Endothelial cell of umbilical vein (primary cell): ENCODE measurements at regions of chr17 and their contacts with region 1.

Region 1: DNA sequence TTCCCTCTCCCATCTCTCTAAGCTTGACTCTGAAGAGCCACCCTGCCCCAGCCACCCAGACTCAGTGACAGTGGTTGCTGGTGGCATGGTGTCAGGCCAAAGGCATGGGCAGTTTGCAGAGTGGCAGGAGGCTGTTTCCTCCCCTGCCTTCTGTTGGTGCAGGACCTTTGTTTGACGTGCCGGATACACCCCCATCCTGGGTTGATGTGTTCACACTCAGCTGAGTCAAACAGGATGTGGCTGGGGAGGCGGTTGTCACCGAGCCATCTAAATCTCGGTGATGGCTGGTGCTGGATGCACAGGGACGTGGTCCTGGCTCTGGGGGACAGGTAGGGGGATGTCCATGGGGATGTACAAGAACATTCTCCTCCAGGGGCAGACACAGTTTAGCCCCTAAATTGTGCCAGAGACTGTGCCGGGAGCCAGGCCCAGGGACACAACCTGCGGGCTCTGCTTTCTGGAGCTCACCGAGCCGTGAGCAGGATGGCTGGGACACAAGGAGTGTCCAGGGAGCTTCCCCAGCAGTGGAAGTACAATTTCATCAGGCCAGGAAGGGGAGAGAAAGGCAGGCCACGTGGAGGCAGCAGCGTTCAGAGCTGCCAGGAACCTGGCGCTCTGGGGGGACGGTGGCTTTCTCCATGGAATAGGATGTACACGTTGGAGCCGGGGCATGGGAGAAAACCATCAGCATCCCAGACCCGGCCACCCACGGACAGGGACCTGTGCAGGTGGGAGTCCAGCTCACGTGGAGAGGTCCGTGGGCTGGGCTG is 264.2 kb downstream of the SEC14L1 start:
- DNase-seq: peak; percentile 82
- H3K4me3 ChIP-seq: no peak overlapping the region
- H3K27ac ChIP-seq: peak overlapping the region; percentile 63
- H3K4me1 ChIP-seq: peaks cover 25% of the 10 kb centered on the region
- H3K27me3 ChIP-seq: no peaks in the 10 kb centered on the region
- CTCF ChIP-seq: no peak
- POLR2A ChIP-seq: no peak

Region 2: GRCh38 chr17:77331301-77331864 is 73.6 kb before region 1 on chr17:
- CTCF ChIA-PET with region 1: interaction called, 63 read pairs
- POLR2A ChIA-PET with region 1: no interaction called
- dilution Hi-C with region 1: no loop called
- intact Hi-C with region 1: loop called (anchors 1 kb)
- DNase-seq: peak; percentile 78
- H3K4me3 ChIP-seq: peak overlapping the region in 1 of 3 experiments; percentile 14
- H3K27ac ChIP-seq: no peak overlapping the region
- H3K4me1 ChIP-seq: peaks cover 5% of the 10 kb centered on the region
- H3K27me3 ChIP-seq: no peaks in the 10 kb centered on the region
- CTCF ChIP-seq: peak; percentile 85 to 95
- POLR2A ChIP-seq: no peak

Region 3: GRCh38 chr17:77391668-77392375 is 13.2 kb before region 1 on chr17:
- CTCF ChIA-PET with region 1: interaction called, 58 read pairs
- POLR2A ChIA-PET with region 1: no interaction called
- dilution Hi-C with region 1: no loop called
- intact Hi-C with region 1: loop called (anchors 1 kb)
- DNase-seq: peak; percentile 57
- H3K4me3 ChIP-seq: no peak overlapping the region
- H3K27ac ChIP-seq: no peak overlapping the region
- H3K4me1 ChIP-seq: peaks cover 47% of the 10 kb centered on the region
- H3K27me3 ChIP-seq: no peaks in the 10 kb centered on the region
- CTCF ChIP-seq: no peak
- POLR2A ChIP-seq: peak; percentile 42

Region 4: DNA sequence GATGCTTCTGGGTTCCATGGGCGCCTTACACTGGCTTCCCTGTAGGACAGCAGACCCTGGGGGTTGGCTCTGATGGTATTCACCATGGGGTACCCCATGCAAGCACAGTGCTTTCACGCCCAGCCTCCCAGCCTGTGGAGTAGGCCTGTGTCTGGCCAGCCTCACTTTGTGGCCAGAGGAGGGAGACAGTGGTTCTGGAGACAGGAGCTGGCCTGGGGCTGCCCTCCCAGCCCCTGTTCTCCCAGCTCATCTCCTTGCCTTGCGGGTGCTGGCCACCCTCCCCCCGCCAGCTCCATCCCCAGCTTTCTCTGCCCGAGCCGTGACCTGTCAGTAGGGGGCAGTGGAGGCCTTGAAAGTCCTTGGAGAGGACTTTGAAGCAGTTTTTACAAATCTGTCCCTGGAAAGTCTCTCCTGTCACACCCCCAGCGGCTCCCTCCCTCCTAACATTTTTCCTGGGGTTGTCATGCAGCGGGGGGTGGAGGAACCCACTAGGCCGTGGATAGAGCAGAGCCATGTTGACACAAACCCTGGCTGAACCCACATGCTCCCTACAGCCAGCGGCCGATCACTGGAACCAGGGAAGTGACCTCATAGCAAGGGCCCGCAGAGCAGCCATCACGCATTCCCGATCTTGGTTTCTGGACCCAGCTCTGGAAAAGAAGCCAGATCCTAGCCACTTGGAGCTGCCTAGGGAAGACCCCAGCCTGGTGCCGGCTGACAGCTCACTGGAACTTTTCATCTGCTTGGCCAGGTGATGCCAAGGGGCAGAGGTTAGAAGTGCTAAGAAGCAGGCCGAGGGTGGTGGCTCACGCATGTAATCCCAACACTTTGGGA is 25.1 kb after region 1 on chr17:
- CTCF ChIA-PET with region 1: interaction called, 128 read pairs
- POLR2A ChIA-PET with region 1: no interaction called
- dilution Hi-C with region 1: no loop called
- intact Hi-C with region 1: loop called (anchors 2 kb)
- DNase-seq: peak; percentile 92
- H3K4me3 ChIP-seq: no peak overlapping the region
- H3K27ac ChIP-seq: peak overlapping the region; percentile 31
- H3K4me1 ChIP-seq: peaks cover 24% of the 10 kb centered on the region
- H3K27me3 ChIP-seq: no peaks in the 10 kb centered on the region
- CTCF ChIP-seq: peak; percentile 81 to 85
- POLR2A ChIP-seq: peak; percentile 9

Region 5: GRCh38 chr17:77451245-77451893 is 46.4 kb after region 1 on chr17:
- CTCF ChIA-PET with region 1: interaction called, 21 read pairs
- POLR2A ChIA-PET with region 1: no interaction called
- dilution Hi-C with region 1: no loop called
- intact Hi-C with region 1: no loop called
- DNase-seq: peak; percentile 71
- H3K4me3 ChIP-seq: peak overlapping the region; percentile 70 to 81 (median 78)
- H3K27ac ChIP-seq: peak overlapping the region; percentile 48
- H3K4me1 ChIP-seq: peaks cover 28% of the 10 kb centered on the region
- H3K27me3 ChIP-seq: no peaks in the 10 kb centered on the region
- CTCF ChIP-seq: no peak
- POLR2A ChIP-seq: peak; percentile 35

Region 6: DNA sequence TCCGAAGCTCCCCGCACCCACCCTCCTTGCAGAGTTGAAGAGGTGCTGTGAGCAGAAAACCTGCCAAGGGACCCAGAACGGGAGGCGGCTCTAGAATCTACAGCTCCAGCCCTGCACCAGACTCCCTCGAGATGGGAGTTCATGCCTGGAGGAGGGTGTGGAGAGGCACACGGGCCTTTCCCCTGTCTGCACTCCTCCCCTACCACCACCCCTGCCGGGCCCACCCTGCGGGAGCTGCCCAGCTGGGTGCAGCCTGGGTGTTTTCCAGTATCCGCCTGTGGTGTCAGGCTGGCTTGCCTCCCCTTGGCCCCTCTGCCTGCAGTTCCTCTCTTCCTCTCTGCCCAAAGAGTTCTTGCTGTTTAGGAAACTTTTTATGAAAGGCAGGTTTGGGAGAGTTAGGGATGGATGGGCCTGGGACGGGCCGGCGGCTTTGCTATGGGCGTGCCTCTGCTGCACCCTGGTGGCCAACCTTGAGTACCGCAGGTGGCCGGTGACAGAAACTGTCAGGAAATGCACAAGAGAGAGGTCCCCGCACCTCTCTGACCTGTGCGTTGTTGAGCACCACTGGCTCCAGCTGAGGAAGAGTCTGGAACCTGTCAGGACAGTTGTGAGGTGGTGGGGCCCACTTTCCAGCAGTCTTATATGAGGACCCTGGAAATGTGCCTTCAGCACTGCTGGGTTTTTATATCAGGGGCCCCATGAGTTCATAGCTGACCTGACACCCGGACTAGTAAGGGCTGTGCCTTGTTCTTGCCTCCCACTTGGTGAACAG is 89.9 kb after region 1 on chr17:
- CTCF ChIA-PET with region 1: interaction called, 65 read pairs
- POLR2A ChIA-PET with region 1: no interaction called
- dilution Hi-C with region 1: no loop called
- intact Hi-C with region 1: loop called (anchors 1 kb)
- DNase-seq: peak; percentile 60
- H3K4me3 ChIP-seq: no peak overlapping the region
- H3K27ac ChIP-seq: no peak overlapping the region
- H3K4me1 ChIP-seq: peaks cover 3% of the 10 kb centered on the region
- H3K27me3 ChIP-seq: no peaks in the 10 kb centered on the region
- CTCF ChIP-seq: peak; percentile 83 to 94
- POLR2A ChIP-seq: no peak